ENCODE measurements at regions of chrX and their contacts with region 1.

Region 1: GRCh38 chrX:1507511-1508463 is 29.2 kb downstream of the P2RY8 start:
- DNase-seq: peak; percentile 66
- ATAC-seq: peak; percentile 77
- H3K4me3 Mint-ChIP-seq: no peak overlapping the region
- H3K27ac Mint-ChIP-seq: no peak overlapping the region
- H3K4me1 Mint-ChIP-seq: peaks cover 15% of the 10 kb centered on the region
- H3K27me3 Mint-ChIP-seq: no peaks in the 10 kb centered on the region
- CTCF ChIP-seq: no peak

Region 2: DNA sequence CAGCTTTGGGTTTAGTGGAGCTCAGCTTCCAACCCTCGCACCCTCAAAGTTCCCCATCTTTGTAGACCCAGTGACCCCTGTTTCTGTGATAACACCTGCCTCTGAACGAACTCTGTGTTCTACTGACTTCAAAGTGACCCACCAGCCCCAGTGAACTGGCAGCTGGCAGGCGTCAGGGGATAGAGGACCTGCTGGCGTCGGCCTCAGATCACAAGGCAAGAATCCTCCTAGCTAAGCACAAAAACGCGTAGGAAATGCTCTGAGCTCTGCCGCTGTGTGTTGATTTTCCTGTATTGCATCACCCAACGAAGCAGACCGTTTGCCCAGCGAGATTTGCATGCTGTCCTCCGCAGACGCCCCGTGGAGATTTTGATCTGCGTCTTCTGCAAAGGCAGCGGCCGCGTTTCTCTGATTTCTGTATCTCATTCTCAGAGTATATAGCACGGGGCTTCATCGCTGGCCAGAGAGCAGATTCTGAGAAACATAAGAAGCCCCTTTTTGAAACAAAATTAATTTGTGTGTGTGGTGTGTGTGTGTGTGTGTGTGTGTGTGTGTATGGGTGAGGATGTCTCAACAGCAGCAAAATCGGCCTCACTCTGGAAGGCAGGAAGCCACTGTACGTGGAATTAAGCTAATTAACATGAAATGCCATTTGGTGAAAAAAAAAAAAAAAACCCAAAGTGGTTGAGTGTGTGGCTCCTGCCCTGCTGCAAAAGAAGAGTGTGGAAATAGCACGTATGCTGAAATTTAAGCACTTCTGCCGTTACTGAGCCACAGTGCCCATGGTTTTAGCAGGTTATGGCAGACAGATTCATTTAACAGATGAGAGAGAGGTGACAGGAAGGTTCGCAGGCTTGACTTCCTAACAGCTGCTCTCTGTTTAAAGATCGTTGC is 25.9 kb before region 1 on chrX:
- CTCF ChIA-PET with region 1: no interaction called
- POLR2A ChIA-PET with region 1: no interaction called
- intact Hi-C with region 1: loop called (anchors 1 kb)
- DNase-seq: peak; percentile 63
- ATAC-seq: peak; percentile 53
- H3K4me3 Mint-ChIP-seq: peak overlapping the region; percentile 81
- H3K27ac Mint-ChIP-seq: peak overlapping the region; percentile 97
- H3K4me1 Mint-ChIP-seq: peaks cover 90% of the 10 kb centered on the region
- H3K27me3 Mint-ChIP-seq: no peaks in the 10 kb centered on the region
- CTCF ChIP-seq: no peak

Region 3: DNA sequence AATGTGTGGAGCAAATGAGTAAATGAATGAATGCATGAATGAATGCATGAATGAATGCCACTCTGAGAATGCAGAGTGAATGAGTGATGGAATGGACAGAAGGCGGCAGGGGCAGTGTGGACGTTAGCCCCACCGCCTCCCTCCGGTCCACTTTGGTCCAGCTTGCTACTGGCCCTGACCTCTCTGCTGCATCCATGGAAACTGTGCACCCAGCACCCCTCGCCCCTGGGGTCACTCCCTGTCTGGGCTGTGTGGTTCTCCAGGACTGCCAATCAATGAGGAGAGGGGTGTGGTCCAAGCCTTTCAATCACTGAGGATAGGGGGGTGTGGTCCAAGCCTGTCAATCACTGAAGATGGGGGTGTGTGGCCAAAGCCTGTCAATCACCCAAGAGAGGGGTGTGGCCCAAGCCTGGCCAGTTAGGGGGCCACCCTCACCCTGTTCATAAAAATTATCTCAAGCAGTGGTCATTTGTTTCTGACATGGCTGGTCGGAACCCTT is 15.9 kb before region 1 on chrX:
- CTCF ChIA-PET with region 1: no interaction called
- POLR2A ChIA-PET with region 1: no interaction called
- intact Hi-C with region 1: loop called (anchors 1 kb)
- DNase-seq: peak; percentile 61
- ATAC-seq: peak; percentile 66
- H3K4me3 Mint-ChIP-seq: peak overlapping the region; percentile 88
- H3K27ac Mint-ChIP-seq: peak overlapping the region; percentile 88
- H3K4me1 Mint-ChIP-seq: peaks cover 69% of the 10 kb centered on the region
- H3K27me3 Mint-ChIP-seq: no peaks in the 10 kb centered on the region
- CTCF ChIP-seq: no peak

Region 4: DNA sequence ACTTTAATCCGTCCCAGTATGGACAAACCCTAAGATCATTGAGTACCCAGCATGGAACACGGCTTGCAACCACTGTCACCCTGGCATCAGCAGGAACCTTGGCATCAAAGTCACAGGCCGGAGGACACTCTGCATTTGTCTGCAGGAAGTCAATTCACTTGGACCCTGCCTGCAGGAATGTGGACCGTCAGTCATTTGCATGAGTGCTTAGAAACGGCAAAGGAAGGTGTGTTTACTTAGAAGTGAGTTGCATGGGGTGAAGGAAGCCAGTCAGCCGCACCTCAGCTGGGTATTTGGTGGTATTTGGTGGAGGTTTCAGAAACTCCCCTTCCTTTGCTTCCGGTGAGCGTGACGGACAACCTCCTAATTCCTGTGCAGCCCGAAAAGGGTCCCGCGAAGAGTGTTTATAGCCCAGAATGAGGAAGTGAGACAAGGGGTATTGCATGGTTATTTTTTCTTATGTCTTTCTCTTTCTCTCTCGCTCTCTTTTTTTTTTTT is 13.7 kb after region 1 on chrX:
- CTCF ChIA-PET with region 1: no interaction called
- POLR2A ChIA-PET with region 1: no interaction called
- intact Hi-C with region 1: loop called (anchors 1 kb)
- DNase-seq: peak; percentile 66
- ATAC-seq: peak; percentile 85
- H3K4me3 Mint-ChIP-seq: peak overlapping the region; percentile 83
- H3K27ac Mint-ChIP-seq: peak overlapping the region; percentile 97
- H3K4me1 Mint-ChIP-seq: peaks cover 64% of the 10 kb centered on the region
- H3K27me3 Mint-ChIP-seq: no peaks in the 10 kb centered on the region
- CTCF ChIP-seq: no peak

Region 5: GRCh38 chrX:2608638-2609430 is 1101.0 kb after region 1 on chrX:
- CTCF ChIA-PET with region 1: no interaction called
- POLR2A ChIA-PET with region 1: no interaction called
- intact Hi-C with region 1: loop called (anchors 5 kb)
- DNase-seq: peak; percentile 84
- ATAC-seq: peak; percentile 97
- H3K4me3 Mint-ChIP-seq: peak overlapping the region; percentile 93
- H3K27ac Mint-ChIP-seq: peak overlapping the region; percentile 81
- H3K4me1 Mint-ChIP-seq: peaks cover 36% of the 10 kb centered on the region
- H3K27me3 Mint-ChIP-seq: no peaks in the 10 kb centered on the region
- CTCF ChIP-seq: no peak

Measured in activated B cell treated with CpG ODN at 0.5 μM for 24 hours (primary cell).